GM23248 (cell line): ENCODE measurements at regions of chr11 and their contacts with region 1.

Region 1: DNA sequence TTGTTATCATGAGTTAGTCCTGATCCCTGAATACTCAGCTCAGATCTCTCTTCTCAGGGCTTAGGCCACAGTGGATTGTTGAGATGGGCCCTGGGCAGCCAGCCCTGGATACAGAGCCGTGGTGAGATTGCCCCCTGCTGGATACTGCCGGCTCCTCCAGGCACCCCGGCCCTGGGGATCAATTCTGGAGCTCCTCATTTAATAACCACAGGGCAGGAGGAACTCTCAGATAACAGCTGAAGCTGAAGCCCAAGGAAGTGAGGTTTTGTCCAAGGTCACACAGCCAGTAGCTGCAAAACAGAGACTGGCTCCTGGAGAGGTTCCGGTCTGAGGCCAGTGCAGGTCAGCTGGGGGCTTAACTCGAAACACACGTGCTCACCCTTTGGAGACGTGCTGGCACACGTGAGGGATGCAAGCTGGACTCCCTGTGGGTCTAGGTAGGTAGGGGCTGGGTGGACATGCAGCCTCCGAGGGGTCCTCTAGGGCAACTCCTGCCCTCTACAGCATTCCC is 16.0 kb downstream of the USH1C start:
- DNase-seq: peak; percentile 71
- H3K4me3 ChIP-seq: no peak overlapping the region
- H3K27ac ChIP-seq: no peak overlapping the region
- H3K4me1 ChIP-seq: no peaks in the 10 kb centered on the region
- H3K27me3 ChIP-seq: peaks cover 29% of the 10 kb centered on the region

Region 2: GRCh38 chr11:17230867-17231851 is 297.1 kb before region 1 on chr11:
- in situ Hi-C with region 1: loop called (anchors 10 kb)
- DNase-seq: no peak
- H3K4me3 ChIP-seq: no peak overlapping the region
- H3K27ac ChIP-seq: no peak overlapping the region
- H3K4me1 ChIP-seq: no peaks in the 10 kb centered on the region
- H3K27me3 ChIP-seq: no peaks in the 10 kb centered on the region

Region 3: DNA sequence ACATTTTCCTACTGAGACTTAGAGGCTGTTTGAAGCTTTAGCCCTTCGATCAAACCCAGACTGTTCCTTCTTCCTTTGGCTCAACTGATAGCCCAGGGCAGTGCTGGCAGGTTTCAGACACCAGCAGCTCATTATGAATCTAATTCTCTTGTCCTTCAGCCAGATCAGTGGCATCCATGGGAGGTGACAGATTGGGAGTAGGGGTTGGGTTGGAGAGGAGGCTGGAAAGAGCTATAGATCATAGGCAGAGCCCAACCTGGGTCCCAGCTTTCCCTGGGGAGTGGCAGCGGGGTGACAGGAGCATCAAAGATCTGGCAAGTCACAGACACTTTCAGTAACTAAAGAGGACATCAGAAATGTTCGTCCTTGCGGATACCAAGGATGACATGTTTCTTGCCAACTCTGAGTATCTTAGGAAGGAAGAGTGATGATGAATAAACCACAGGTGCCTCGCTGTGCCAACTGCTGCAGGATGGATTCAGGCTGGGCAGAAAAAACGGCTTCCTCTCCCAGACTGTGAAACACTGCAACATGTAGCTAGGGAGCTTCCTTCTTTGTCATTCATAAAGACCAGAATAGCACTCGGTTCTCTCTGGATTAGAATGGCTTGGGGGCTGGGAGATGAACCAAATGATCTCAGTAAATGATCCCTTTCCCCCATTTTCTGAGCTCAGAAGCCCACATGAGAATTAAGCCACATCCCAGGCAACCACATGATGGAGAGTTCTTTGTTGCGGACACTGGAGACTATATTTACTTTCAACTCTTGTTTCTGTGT is 70.7 kb before region 1 on chr11:
- in situ Hi-C with region 1: no loop called
- DNase-seq: no peak
- H3K4me3 ChIP-seq: no peak overlapping the region
- H3K27ac ChIP-seq: no peak overlapping the region
- H3K4me1 ChIP-seq: no peaks in the 10 kb centered on the region
- H3K27me3 ChIP-seq: peaks cover 17% of the 10 kb centered on the region

Region 4: GRCh38 chr11:18193010-18193409 is 664.8 kb after region 1 on chr11:
- in situ Hi-C with region 1: no loop called
- DNase-seq: no peak
- H3K4me3 ChIP-seq: no peak overlapping the region
- H3K27ac ChIP-seq: no peak overlapping the region
- H3K4me1 ChIP-seq: no peaks in the 10 kb centered on the region
- H3K27me3 ChIP-seq: no peaks in the 10 kb centered on the region; the same call in 1 of the 2 replicates